Activated naive CD4-positive, alpha-beta T cell treated with anti-CD3 and anti-CD28 coated beads for 36 hours (primary cell): ENCODE measurements at regions of chr14 and their contacts with region 1.

Region 1: GRCh38 chr14:90383075-90383730 is 13.6 kb upstream of the CALM1 start:
- DNase-seq: peak; percentile 99
- H3K4me3 Mint-ChIP-seq: no peak overlapping the region
- H3K27ac Mint-ChIP-seq: no peak overlapping the region
- H3K4me1 Mint-ChIP-seq: peaks cover 23% of the 10 kb centered on the region
- H3K27me3 Mint-ChIP-seq: no peaks in the 10 kb centered on the region

Region 2: GRCh38 chr14:88824314-88825077 is 1558.7 kb before region 1 on chr14 and contains the start of gene TTC8:
- CTCF ChIA-PET with region 1: no interaction called
- intact Hi-C with region 1: loop called (anchors 2 kb)
- DNase-seq: peak; percentile 88
- H3K4me3 Mint-ChIP-seq: peak within 1 kb of the TSS; percentile 80
- H3K27ac Mint-ChIP-seq: peak within 1 kb of the TSS; percentile 92
- H3K4me1 Mint-ChIP-seq: peaks cover 9% of the 10 kb centered on the region
- H3K27me3 Mint-ChIP-seq: no peaks in the 10 kb centered on the region
- total RNA-seq, gene TTC8: 1.8 to 1.9 TPM

Region 3: DNA sequence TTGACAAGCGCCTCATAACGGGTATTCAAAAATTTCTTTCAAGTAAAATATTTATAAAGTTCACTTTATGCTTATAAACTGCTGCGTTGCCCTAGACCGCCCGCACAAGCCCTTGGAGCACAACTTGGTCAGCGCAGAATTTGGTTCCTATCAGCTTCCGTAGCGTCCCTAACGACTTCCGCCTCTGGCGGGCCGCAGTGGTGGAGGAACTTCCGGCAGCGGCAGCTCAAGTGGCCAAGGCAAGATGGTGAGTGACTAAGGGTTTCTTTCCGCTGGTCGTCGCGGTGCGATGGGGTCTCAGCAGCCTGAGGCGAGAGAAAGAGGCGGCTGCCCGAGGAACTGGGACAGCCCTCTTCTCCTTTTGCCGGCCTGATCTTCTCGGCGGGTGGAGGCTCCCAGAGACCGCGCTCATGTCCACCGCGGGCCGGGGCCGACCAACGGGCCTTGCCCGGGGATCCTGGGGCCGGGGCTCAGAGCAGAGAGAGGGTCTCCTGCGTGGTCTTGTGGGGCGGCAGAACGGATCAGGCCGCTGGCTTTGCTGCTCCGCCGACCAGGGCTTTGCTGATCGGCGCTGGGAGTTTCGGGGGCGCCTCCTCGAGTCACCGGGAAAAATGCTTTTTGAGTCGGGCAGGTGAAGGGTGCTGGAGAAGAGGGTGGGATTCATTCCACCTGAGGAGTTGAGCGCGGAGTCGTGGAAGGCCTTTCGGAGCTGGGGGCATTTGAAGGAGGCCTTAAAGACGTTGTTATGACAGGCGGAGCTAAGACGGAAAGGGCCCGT is 126.7 kb before region 1 on chr14 and contains the start of gene PSMC1:
- CTCF ChIA-PET with region 1: no interaction called
- intact Hi-C with region 1: loop called (anchors 1 kb)
- DNase-seq: peak; percentile 96
- H3K4me3 Mint-ChIP-seq: peak within 1 kb of the TSS; percentile 98
- H3K27ac Mint-ChIP-seq: peak within 1 kb of the TSS; percentile 93
- H3K4me1 Mint-ChIP-seq: peaks cover 32% of the 10 kb centered on the region
- H3K27me3 Mint-ChIP-seq: peaks cover 3% of the 10 kb centered on the region
- total RNA-seq, gene PSMC1: 102 to 105 TPM

Region 4: GRCh38 chr14:90331497-90332435 is 51.4 kb before region 1 on chr14 and contains the start of gene NRDE2:
- CTCF ChIA-PET with region 1: interaction called, 4 read pairs
- intact Hi-C with region 1: loop called (anchors 1 kb)
- DNase-seq: peak; percentile 98
- H3K4me3 Mint-ChIP-seq: peak within 1 kb of the TSS; percentile 90
- H3K27ac Mint-ChIP-seq: peak within 1 kb of the TSS; percentile 92
- H3K4me1 Mint-ChIP-seq: peaks cover 23% of the 10 kb centered on the region
- H3K27me3 Mint-ChIP-seq: no peaks in the 10 kb centered on the region
- total RNA-seq, gene NRDE2: 22.0 to 23.1 TPM

Region 5: GRCh38 chr14:90758028-90758889 is 375.1 kb after region 1 on chr14:
- CTCF ChIA-PET with region 1: no interaction called
- intact Hi-C with region 1: loop called (anchors 1 kb)
- DNase-seq: peak; percentile 92
- H3K4me3 Mint-ChIP-seq: peak overlapping the region; percentile 76
- H3K27ac Mint-ChIP-seq: peak overlapping the region; percentile 80
- H3K4me1 Mint-ChIP-seq: peaks cover 14% of the 10 kb centered on the region
- H3K27me3 Mint-ChIP-seq: peaks cover 2% of the 10 kb centered on the region

Region 6: DNA sequence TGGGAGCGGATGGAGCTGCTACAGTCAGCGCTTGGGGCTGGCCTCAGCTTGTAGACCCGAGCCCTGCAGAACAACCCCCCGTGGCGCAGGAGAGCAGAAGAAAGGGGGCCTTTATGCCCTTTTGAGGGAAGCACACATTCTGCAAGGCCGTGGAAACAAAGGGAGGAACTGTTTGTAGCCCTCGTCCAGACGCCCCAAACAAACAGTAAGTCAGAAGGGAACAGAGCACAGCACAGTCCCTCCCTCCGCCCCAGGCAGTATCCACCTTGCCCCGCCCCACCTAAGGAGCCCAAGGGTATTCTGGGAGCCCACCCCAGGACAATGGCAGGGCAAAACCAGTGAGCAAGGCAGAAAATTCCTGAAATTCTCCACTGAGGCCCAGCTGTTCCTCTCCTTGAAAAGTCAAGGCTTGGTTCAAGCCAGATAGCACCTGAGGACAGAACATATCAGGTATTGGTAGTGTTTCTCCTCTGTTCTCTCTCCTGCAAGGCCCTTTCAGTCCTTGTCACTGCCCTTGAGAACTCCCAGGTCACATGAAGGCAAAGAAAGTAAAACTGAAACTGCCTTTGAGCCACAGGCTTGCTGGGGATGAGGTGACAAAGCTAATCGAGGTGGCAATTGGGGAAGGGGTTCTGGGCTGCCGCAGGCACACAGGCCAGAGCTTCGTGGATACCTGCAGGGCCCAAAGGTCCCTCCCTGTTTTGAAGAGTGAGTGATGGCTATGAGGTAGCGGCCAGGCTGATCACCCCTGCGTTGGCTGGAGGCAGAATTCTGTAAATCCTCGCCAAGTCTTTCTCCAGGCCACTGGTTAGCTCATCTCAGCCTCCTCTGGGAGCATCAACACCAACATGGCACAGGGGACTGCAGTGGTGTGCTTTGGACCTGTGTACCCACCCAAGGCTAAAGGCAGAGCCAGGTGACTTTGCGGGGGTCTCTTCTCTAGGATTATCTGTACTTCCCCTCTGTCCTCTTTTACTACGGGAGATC is 731.2 kb after region 1 on chr14:
- CTCF ChIA-PET with region 1: no interaction called
- intact Hi-C with region 1: loop called (anchors 1 kb)
- DNase-seq: peak; percentile 82
- H3K4me3 Mint-ChIP-seq: peak overlapping the region; percentile 94
- H3K27ac Mint-ChIP-seq: peak overlapping the region; percentile 95
- H3K4me1 Mint-ChIP-seq: peaks cover 60% of the 10 kb centered on the region
- H3K27me3 Mint-ChIP-seq: no peaks in the 10 kb centered on the region